ENCODE measurements at regions of chr4 and their contacts with region 1.

Region 1: GRCh38 chr4:85548841-85549240 is 73.9 kb downstream of the ARHGAP24 start:
- DNase-seq: no peak
- ATAC-seq: no peak
- H3K4me3 ChIP-seq: no peak overlapping the region
- H3K27ac ChIP-seq: no peak overlapping the region
- H3K4me1 ChIP-seq: no peaks in the 10 kb centered on the region
- H3K27me3 ChIP-seq: no peaks in the 10 kb centered on the region
- CTCF ChIP-seq: no peak
- POLR2A ChIP-seq: no peak

Region 2: GRCh38 chr4:85500110-85500867 is 48.6 kb before region 1 on chr4:
- in situ Hi-C with region 1: no loop called
- intact Hi-C with region 1: loop called (anchors 1 kb)
- DNase-seq: no peak
- ATAC-seq: peak; percentile 66 to 85
- H3K4me3 ChIP-seq: no peak overlapping the region
- H3K27ac ChIP-seq: no peak overlapping the region
- H3K4me1 ChIP-seq: peaks cover 0 to 6% of the 10 kb centered on the region in 2 donors
- H3K27me3 ChIP-seq: no peaks in the 10 kb centered on the region
- CTCF ChIP-seq: no peak
- POLR2A ChIP-seq: no peak

Region 3: GRCh38 chr4:85603437-85604336 is 54.8 kb after region 1 on chr4:
- in situ Hi-C with region 1: no loop called
- intact Hi-C with region 1: no loop called
- DNase-seq: no peak
- ATAC-seq: no peak
- H3K4me3 ChIP-seq: no peak overlapping the region
- H3K27ac ChIP-seq: no peak overlapping the region
- H3K4me1 ChIP-seq: no peaks in the 10 kb centered on the region
- H3K27me3 ChIP-seq: no peaks in the 10 kb centered on the region
- CTCF ChIP-seq: no peak
- POLR2A ChIP-seq: no peak

Region 4: DNA sequence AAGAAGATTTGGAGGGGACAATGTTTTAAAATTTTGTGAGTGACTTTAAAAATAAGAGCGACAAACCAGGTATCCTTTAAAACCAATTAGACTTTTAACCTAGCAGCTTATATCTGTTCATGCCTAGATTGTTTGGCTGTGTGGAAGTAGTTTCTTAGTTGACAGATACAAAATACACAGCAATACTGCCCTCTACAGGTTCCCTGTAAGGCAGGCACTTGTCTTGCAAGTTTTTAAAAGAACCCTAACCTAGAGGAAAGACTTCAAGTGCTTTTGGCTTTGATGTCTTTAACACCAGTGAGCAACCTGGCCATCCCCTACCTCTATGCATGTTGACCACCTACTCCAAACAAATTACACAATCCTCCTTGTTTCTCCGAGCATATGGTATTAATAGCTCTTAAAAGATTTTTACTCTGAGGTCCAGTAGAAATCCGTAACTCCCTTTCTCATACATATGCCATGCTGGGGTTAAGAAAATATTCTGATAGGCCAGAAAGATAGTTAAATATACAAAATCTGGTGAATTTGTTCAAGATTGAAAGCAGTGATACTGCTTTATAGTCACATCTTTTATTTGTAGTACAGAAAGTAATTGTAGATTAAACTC is 199.1 kb after region 1 on chr4:
- in situ Hi-C with region 1: no loop called
- intact Hi-C with region 1: no loop called
- DNase-seq: no peak
- ATAC-seq: peak; percentile 60 to 79
- H3K4me3 ChIP-seq: no peak overlapping the region
- H3K27ac ChIP-seq: no peak overlapping the region
- H3K4me1 ChIP-seq: peaks cover 0 to 3% of the 10 kb centered on the region in 2 donors
- H3K27me3 ChIP-seq: no peaks in the 10 kb centered on the region
- CTCF ChIP-seq: peak; percentile 53 to 81 (median 69)
- POLR2A ChIP-seq: no peak

Measured in gastrocnemius medialis (tissue), 4 donors.